ENCODE measurements at regions of chr3 and their contacts with region 1.

Region 1: DNA sequence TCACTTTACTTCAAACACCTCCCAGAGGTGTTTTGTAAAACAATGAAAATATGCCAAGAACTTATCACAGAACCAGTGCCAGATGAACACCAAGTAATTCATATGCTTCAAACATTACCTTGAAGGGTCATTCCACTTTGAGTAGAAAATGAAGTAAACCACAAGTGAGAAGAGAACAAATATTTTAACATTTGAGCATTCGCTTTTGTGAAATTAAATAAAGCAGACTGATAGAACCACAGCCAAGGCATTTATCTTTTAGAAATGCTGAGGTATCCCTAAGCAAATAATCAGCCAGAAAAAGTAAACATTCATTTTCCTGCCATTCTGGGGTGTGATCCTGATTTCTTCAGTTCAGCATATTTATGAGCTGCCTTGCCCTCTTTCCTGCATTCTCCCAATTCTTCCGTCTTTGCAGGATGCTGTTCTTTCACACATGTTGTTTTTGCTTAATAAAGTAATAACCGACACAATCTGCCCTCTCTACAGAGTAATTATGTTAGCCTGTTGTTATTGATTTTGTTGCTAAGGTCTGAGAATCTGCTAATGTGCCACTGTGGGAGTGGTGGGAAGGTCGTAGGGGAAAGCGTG is 235.6 kb upstream of the TGFBR2 start:
- DNase-seq: peak; percentile 83
- ATAC-seq: peak; percentile 94
- H3K4me3 ChIP-seq: no peak overlapping the region
- H3K27ac ChIP-seq: peak overlapping the region; percentile 39
- H3K4me1 ChIP-seq: peaks cover 30% of the 10 kb centered on the region
- H3K27me3 ChIP-seq: no peaks in the 10 kb centered on the region
- CTCF ChIP-seq: no peak

Region 2: GRCh38 chr3:29936054-29936453 is 434.7 kb before region 1 on chr3:
- CTCF ChIA-PET with region 1: no interaction called
- POLR2A ChIA-PET with region 1: no interaction called
- intact Hi-C with region 1: no loop called
- DNase-seq: peak; percentile 39
- ATAC-seq: no peak; the same call in 1 of the 2 replicates
- H3K4me3 ChIP-seq: no peak overlapping the region
- H3K27ac ChIP-seq: no peak overlapping the region
- H3K4me1 ChIP-seq: peaks cover 29% of the 10 kb centered on the region
- H3K27me3 ChIP-seq: no peaks in the 10 kb centered on the region
- CTCF ChIP-seq: no peak

Region 3: GRCh38 chr3:30319713-30320112 is 51.1 kb before region 1 on chr3:
- CTCF ChIA-PET with region 1: no interaction called
- POLR2A ChIA-PET with region 1: no interaction called
- intact Hi-C with region 1: no loop called
- DNase-seq: peak; percentile 74
- ATAC-seq: peak; percentile 19; the same call in 1 of the 2 replicates
- H3K4me3 ChIP-seq: no peak overlapping the region
- H3K27ac ChIP-seq: 0 out of 2 replicates have a peak overlapping the region, but pooled peaks have one; percentile 3
- H3K4me1 ChIP-seq: peaks cover 15% of the 10 kb centered on the region
- H3K27me3 ChIP-seq: no peaks in the 10 kb centered on the region
- CTCF ChIP-seq: peak; percentile 68

Region 4: DNA sequence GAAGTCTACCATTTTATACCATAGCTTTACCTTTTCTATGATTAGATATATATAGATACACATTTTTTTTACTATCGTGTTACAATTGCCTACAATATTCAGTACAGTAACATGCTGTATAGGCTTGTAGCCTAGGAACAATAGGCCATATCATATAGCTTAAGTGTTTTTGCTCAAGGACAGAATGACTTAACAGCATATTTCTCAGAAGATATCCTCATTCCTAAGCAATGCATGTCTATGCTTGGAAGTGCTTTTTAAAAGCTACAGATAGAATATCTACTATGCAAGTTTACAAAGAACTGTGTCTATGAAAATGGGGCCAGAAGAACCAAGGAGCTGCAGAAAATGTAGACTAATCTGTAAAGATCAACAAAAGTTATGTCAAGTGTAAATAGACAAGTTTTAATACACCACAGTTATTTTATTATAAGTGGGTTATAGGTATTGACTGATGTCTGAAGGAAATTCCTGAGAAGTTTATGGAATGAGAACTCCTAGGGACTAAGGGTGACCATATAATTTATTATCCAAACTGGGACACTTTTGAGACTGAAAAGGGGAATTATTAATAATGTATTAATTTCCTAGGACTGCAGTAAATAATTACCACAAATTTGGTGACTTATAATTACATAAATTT is 96.9 kb after region 1 on chr3:
- CTCF ChIA-PET with region 1: no interaction called
- POLR2A ChIA-PET with region 1: interaction called, 3 read pairs
- intact Hi-C with region 1: loop called (anchors 2 kb)
- DNase-seq: peak; percentile 64
- ATAC-seq: peak; percentile 90
- H3K4me3 ChIP-seq: no peak overlapping the region
- H3K27ac ChIP-seq: peak overlapping the region; percentile 10; the same call in 1 of the 2 replicates
- H3K4me1 ChIP-seq: peaks cover 27% of the 10 kb centered on the region
- H3K27me3 ChIP-seq: no peaks in the 10 kb centered on the region
- CTCF ChIP-seq: no peak

Region 5: GRCh38 chr3:31004025-31004678 is 633.4 kb after region 1 on chr3:
- CTCF ChIA-PET with region 1: no interaction called
- POLR2A ChIA-PET with region 1: no interaction called
- intact Hi-C with region 1: no loop called
- DNase-seq: peak; percentile 52
- ATAC-seq: no peak
- H3K4me3 ChIP-seq: no peak overlapping the region
- H3K27ac ChIP-seq: no peak overlapping the region
- H3K4me1 ChIP-seq: peaks cover 11% of the 10 kb centered on the region
- H3K27me3 ChIP-seq: no peaks in the 10 kb centered on the region
- CTCF ChIP-seq: no peak

Measured in PC-3 (cell line).